Naive thymus-derived CD4-positive, alpha-beta T cell (primary cell): ENCODE measurements at regions of chr1 and their contacts with region 1.

Region 1: DNA sequence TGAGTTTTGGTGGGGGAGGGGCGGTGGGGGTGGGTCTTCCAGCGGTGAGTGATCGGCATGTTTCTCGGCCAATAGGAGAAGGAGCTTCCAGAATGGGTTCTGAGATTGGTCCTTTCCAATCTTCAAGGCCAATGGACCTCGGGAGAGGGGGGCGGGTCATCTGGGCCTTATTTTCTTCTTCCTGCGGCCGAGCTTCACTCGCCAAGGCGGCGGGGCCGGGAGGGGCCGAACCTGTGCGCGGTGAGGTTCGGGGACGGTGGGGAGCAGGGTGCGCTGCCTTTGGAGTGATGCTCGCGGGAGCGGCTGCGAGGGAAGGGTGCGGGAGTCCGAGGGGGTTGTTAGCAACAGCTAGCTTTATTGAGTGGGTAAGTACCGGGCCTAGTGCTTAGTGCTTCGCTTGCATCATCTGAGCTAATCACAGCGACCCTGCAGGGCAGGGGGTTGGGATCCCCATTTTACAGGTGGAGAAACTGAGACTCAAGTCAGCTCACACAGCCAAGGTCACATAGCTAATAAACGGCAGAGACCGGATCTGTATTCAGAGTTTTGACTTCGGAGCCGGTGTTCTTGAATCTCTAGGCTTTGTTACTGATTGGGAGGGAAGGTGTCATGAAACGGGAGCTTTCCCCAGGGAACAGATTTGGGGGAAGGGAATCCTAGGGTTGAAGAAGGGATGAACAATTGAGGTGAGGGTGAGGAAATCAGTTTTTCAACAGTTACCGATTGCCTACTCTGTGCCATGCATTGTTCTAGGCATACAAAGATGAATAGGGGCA is 549 bp downstream of the KDM4A start:
- DNase-seq: peak in 8 of 9 donors; percentile 70 to 93 (median 90)
- ATAC-seq: peak; percentile 83
- H3K4me3 ChIP-seq: peak overlapping the region; percentile 96
- H3K4me3 Mint-ChIP-seq: peak overlapping the region; percentile 93 to 99 (median 96)
- H3K27ac ChIP-seq: peak overlapping the region; percentile 86
- H3K27ac Mint-ChIP-seq: peak overlapping the region; percentile 85 to 98 (median 95)
- H3K4me1 ChIP-seq: peaks cover 10 to 16% of the 10 kb centered on the region in 2 donors
- H3K4me1 Mint-ChIP-seq: peaks cover 27 to 47% (median 37%) of the 10 kb centered on the region in 7 donors
- H3K27me3 ChIP-seq: no peaks in the 10 kb centered on the region
- H3K27me3 Mint-ChIP-seq: peaks cover 0 to 5% (median 0%) of the 10 kb centered on the region in 5 donors

Region 2: GRCh38 chr1:42456010-42456758 is 1194.3 kb before region 1 on chr1 and contains the starts of genes PPCS and ZMYND12:
- CTCF ChIA-PET with region 1: no interaction called
- POLR2A ChIA-PET with region 1: no interaction called
- intact Hi-C with region 1: loop called (anchors 5 kb)
- DNase-seq: peak; percentile 84 to 94 (median 92)
- ATAC-seq: peak; percentile 95
- H3K4me3 ChIP-seq: peak within 1 kb of the TSS; percentile 100
- H3K4me3 Mint-ChIP-seq: peak within 1 kb of the TSS; percentile 85 to 99 (median 96)
- H3K27ac ChIP-seq: peak within 1 kb of the TSS; percentile 91
- H3K27ac Mint-ChIP-seq: peak within 1 kb of the TSS; percentile 95 to 100 (median 98)
- H3K4me1 ChIP-seq: peaks cover 17 to 23% of the 10 kb centered on the region in 2 donors
- H3K4me1 Mint-ChIP-seq: peaks cover 23 to 53% (median 40%) of the 10 kb centered on the region in 7 donors
- H3K27me3 ChIP-seq: no peaks in the 10 kb centered on the region
- H3K27me3 Mint-ChIP-seq: peaks cover 0 to under 1% (median 0%) of the 10 kb centered on the region in 5 donors
- total RNA-seq, gene PPCS: 45.4 to 78.4 (median 50.0) TPM
- total RNA-seq, gene ZMYND12: 0.44 to 1.2 (median 1.1) TPM

Region 3: GRCh38 chr1:43358746-43359693 is 291.5 kb before region 1 on chr1 and contains the start of gene CDC20:
- CTCF ChIA-PET with region 1: no interaction called
- POLR2A ChIA-PET with region 1: no interaction called
- intact Hi-C with region 1: loop called (anchors 10 kb)
- DNase-seq: peak; percentile 91 to 99 (median 96)
- ATAC-seq: peak; percentile 100
- H3K4me3 ChIP-seq: peak within 1 kb of the TSS; percentile 90
- H3K4me3 Mint-ChIP-seq: peak within 1 kb of the TSS; percentile 74 to 97 (median 90)
- H3K27ac ChIP-seq: peak within 1 kb of the TSS; percentile 78
- H3K27ac Mint-ChIP-seq: peak within 1 kb of the TSS; percentile 22 to 88 (median 87)
- H3K4me1 ChIP-seq: peaks cover 5 to 10% of the 10 kb centered on the region in 2 donors
- H3K4me1 Mint-ChIP-seq: peaks cover 10 to 55% (median 20%) of the 10 kb centered on the region in 7 donors
- H3K27me3 ChIP-seq: no peaks in the 10 kb centered on the region
- H3K27me3 Mint-ChIP-seq: no peaks in the 10 kb centered on the region
- total RNA-seq, gene CDC20: 0.38 to 101 (median 0.78) TPM

Region 4: DNA sequence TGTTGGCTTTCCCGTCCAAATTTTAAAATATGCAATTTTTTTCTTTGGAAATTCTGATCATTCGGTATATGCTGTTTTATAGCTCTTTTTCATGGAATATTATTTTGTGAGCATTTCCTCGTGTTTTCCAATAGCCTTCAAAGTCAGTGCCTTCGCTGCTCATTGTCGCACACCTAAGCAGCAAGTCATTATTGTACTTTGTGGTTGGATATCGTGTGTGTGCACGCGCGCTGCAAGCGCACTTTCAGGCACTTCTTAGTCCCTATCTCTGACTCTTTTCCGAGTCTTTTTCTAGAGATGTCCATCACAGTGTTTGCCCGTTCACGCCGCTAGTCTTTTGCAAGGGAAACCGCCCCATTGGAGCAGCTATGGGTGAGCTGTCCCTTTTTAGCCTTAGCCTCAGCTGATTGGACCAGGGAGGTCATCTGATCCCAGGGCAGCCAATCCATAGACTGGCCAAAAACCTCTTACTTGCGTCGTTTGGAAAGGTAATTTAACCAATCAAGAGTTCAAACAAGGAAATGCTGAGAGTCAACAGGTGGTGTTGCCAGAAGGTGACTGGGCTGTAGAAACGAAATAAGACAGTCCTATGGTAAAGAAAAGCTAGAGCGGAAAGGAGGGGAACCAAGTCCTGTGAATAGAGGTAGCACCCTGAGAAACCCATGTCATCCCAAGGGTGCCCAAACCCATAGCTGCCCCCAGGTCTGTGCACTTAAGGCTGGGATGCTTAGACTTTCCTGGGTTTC is 196.1 kb before region 1 on chr1:
- CTCF ChIA-PET with region 1: no interaction called
- POLR2A ChIA-PET with region 1: interaction called, 3 read pairs
- intact Hi-C with region 1: loop called (anchors 1 to 2 kb)
- DNase-seq: peak in 8 of 9 donors; percentile 53 to 67 (median 63)
- ATAC-seq: peak; percentile 85
- H3K4me3 ChIP-seq: peak overlapping the region; percentile 56
- H3K4me3 Mint-ChIP-seq: peak overlapping the region; percentile 86 to 95 (median 89)
- H3K27ac ChIP-seq: peak overlapping the region; percentile 57
- H3K27ac Mint-ChIP-seq: peak overlapping the region; percentile 63 to 96 (median 85)
- H3K4me1 ChIP-seq: peaks cover 0 to 9% of the 10 kb centered on the region in 2 donors
- H3K4me1 Mint-ChIP-seq: peaks cover 9 to 22% (median 18%) of the 10 kb centered on the region in 7 donors
- H3K27me3 ChIP-seq: no peaks in the 10 kb centered on the region
- H3K27me3 Mint-ChIP-seq: peaks cover 5 to 35% (median 12%) of the 10 kb centered on the region in 5 donors

Region 5: DNA sequence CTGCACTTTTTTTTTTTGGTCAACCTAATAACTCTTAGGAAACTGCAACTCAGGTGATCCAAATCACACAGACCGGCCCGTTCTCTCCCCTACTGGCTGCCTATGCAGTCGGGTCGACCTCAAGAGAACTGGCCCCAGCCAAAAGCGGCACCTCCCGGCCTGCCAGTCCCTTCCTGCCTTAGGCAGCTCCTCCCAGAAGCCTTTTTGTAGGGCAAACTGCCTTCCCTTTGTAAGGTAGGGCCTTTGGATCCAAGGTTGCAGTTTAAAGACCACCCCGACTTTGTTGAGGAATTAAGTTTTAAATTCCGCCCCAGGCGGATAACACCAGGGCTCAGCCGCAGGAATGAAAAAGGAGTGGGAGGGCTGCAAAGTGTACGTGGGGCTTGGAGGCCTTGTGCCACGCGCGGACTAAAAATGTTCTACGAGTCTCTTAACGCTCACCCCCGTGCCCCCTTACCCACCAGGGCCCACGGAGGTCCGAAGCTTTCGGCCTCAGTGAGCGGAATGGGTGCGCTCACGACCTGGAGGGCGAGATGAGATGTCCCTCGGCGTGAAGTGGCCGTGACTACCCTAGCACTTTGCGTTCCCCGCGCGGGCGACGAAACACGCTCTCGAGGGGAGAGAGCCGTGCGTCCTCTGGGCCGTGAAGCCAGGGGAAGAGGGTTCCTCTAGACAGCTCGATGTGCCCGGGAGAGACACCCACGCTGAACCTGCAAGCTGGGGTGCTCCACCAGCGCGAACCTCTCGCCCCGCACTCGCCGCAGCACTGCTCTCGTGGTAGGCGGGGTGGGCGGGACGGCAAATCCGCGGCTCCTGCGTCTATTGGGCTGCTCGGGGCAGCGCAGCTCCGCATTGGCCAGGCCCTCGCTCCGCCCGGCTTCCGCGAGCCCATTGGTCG is 56.3 kb after region 1 on chr1:
- CTCF ChIA-PET with region 1: no interaction called
- POLR2A ChIA-PET with region 1: interaction called, 10 read pairs
- intact Hi-C with region 1: loop called (anchors 1 to 2 kb)
- DNase-seq: peak; percentile 84 to 94 (median 89)
- ATAC-seq: peak; percentile 98
- H3K4me3 ChIP-seq: peak overlapping the region; percentile 92
- H3K4me3 Mint-ChIP-seq: peak overlapping the region; percentile 82 to 90 (median 88)
- H3K27ac ChIP-seq: peak overlapping the region; percentile 79
- H3K27ac Mint-ChIP-seq: peak overlapping the region in 7 of 9 donors; percentile 32 to 87 (median 79)
- H3K4me1 ChIP-seq: peaks cover 7 to 10% of the 10 kb centered on the region in 2 donors
- H3K4me1 Mint-ChIP-seq: peaks cover 7 to 46% (median 27%) of the 10 kb centered on the region in 7 donors
- H3K27me3 ChIP-seq: no peaks in the 10 kb centered on the region
- H3K27me3 Mint-ChIP-seq: no peaks in the 10 kb centered on the region

Region 6: DNA sequence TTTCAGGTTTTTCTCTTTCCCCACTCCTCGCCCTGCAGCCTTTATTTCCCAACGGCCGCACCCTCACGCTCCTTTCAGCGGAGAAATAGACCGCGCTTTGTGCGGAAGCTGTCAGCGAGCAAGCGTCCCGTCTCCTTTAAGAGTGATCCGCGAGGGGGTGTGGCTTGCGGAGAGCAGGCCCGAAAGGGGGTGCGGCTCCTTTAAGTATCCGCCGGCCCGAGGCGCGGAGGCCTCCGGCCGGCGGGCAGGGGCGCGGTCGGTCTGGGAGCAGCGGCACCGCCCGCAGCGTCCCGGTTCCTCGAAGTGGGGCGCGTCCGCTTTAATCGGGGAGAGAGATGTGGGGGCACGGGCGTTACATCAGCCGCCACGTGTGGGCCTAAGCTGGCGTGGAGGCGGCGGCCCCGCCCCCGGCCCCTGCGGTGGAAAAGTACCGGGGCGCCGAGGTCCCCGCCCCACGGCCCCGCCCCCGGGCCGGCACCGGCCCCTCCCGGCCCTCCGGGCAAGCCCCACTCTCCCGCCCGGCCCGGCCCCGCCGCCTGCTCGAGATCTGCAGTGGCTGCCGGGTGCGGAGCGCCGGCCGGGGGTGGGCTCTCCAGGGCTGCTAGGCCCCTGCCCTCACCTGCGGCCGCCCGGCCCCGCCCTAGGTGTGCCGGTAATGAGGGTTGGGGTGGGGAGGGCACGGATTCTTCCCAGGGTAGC is 379.6 kb after region 1 on chr1:
- CTCF ChIA-PET with region 1: no interaction called
- POLR2A ChIA-PET with region 1: no interaction called
- intact Hi-C with region 1: loop called in 1 of 2 experiments (anchors 1 kb)
- DNase-seq: peak; percentile 73 to 90 (median 85)
- ATAC-seq: peak; percentile 90
- H3K4me3 ChIP-seq: peak overlapping the region; percentile 61
- H3K4me3 Mint-ChIP-seq: peak overlapping the region; percentile 94 to 99 (median 97)
- H3K27ac ChIP-seq: peak overlapping the region; percentile 78
- H3K27ac Mint-ChIP-seq: peak overlapping the region; percentile 92 to 98 (median 94)
- H3K4me1 ChIP-seq: peaks cover 0 to 7% of the 10 kb centered on the region in 2 donors
- H3K4me1 Mint-ChIP-seq: peaks cover 16 to 40% (median 23%) of the 10 kb centered on the region in 7 donors
- H3K27me3 ChIP-seq: no peaks in the 10 kb centered on the region
- H3K27me3 Mint-ChIP-seq: no peaks in the 10 kb centered on the region

Region 7: DNA sequence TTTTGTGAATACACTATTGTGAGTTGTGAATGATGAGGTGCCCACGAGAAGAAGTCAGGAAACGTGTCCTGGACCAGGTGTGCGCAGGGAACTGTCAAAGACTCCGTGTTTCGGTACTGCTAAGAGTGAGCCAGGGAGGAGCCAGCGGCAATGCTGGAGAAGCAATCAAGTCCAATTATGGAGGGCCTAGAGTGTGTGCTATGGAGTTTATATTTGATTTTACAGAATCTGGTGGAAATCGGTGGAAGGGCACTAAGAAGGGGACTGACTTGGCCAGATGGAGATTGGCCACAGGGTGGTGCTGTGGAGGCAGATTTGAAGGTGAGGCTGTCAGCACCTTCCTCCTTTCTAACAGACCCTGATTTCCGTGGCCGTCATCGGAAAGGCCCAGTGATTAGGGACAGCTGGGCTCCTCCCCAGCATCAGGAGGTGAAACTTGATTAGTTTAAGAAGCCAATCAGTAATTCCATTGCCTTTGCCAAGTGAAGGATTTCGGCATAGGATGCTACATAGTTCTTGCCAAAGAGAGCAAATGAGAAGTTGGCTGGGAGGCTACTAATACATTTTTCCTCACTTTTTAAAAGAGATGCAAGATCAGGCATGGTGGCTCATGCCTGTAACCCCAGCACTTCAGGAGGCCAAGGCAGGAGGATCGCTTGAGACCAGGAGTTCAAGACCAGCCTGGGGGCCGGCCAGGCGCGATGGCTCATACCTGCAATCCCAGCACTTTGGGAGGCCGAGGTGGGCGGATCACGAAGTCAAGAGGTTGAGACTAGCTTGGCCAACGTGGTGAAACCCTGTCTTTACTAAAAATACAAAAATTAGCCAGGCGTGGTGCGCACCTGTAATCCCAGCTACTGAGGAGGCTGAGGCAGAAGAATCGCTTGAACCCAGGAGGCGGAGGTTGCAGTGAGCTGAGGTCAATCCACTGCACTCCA is 1185.5 kb after region 1 on chr1:
- CTCF ChIA-PET with region 1: no interaction called
- POLR2A ChIA-PET with region 1: no interaction called
- intact Hi-C with region 1: no loop called
- DNase-seq: peak; percentile 58 to 82 (median 75)
- ATAC-seq: peak; percentile 96
- H3K4me3 ChIP-seq: no peak overlapping the region
- H3K4me3 Mint-ChIP-seq: peak overlapping the region in 9 of 10 donors; percentile 3 to 73 (median 42)
- H3K27ac ChIP-seq: no peak overlapping the region
- H3K27ac Mint-ChIP-seq: peak overlapping the region in 8 of 9 donors; percentile 12 to 81 (median 41)
- H3K4me1 ChIP-seq: no peaks in the 10 kb centered on the region
- H3K4me1 Mint-ChIP-seq: peaks cover 7 to 19% (median 8%) of the 10 kb centered on the region in 7 donors
- H3K27me3 ChIP-seq: no peaks in the 10 kb centered on the region
- H3K27me3 Mint-ChIP-seq: peaks cover under 1 to 9% (median under 1%) of the 10 kb centered on the region in 5 donors

Region 8: GRCh38 chr1:44881011-44881632 is 1230.6 kb after region 1 on chr1:
- CTCF ChIA-PET with region 1: no interaction called
- POLR2A ChIA-PET with region 1: no interaction called
- intact Hi-C with region 1: no loop called
- DNase-seq: no peak
- ATAC-seq: no peak
- H3K4me3 ChIP-seq: no peak overlapping the region
- H3K4me3 Mint-ChIP-seq: no peak overlapping the region
- H3K27ac ChIP-seq: no peak overlapping the region
- H3K27ac Mint-ChIP-seq: peak overlapping the region in 1 of 9 donors; percentile 47
- H3K4me1 ChIP-seq: no peaks in the 10 kb centered on the region
- H3K4me1 Mint-ChIP-seq: no peaks in the 10 kb centered on the region
- H3K27me3 ChIP-seq: no peaks in the 10 kb centered on the region
- H3K27me3 Mint-ChIP-seq: no peaks in the 10 kb centered on the region